ENCODE measurements at regions of chr9 and their contacts with region 1.

Region 1: GRCh38 chr9:90773617-90774016 is 28.0 kb upstream of the SYK start:
- DNase-seq: no peak
- ATAC-seq: no peak
- H3K4me3 Mint-ChIP-seq: no peak overlapping the region
- H3K27ac Mint-ChIP-seq: no peak overlapping the region
- H3K4me1 Mint-ChIP-seq: no peaks in the 10 kb centered on the region
- H3K27me3 Mint-ChIP-seq: no peaks in the 10 kb centered on the region

Region 2: DNA sequence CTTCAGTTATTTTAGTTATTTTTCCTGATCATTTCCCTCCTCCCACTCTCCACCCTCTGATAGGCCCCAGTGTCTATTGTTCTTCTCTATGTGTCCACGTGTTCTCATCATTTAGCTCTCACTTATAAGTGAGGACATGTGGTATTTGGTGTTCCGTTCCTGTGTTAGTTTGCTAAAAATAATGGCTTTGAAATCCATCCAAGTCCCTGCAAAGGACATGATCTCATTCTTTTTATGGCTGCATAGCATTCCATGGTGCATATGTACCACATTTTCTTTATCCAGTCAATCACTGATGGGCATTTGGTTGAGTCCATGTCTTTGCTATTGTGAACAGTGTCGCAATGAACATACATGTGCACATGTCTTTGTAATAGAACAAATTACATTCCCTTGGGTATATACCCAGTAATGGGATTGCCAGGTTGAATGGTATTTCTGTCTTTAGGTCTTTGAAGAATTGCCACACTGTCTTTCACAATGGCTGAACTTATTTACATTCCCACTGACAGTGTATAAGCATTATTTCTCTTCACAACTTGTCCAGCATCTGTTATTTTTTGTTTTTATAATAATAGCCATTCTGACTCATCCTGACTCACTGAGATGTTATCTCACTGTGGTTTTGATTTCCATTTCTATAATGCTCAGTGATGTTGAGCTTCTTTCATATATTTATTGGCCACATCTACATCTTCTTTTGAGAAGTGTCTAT is 113.8 kb before region 1 on chr9:
- CTCF ChIA-PET with region 1: no interaction called
- POLR2A ChIA-PET with region 1: no interaction called
- intact Hi-C with region 1: no loop called
- DNase-seq: no peak
- ATAC-seq: no peak
- H3K4me3 Mint-ChIP-seq: no peak overlapping the region
- H3K27ac Mint-ChIP-seq: no peak overlapping the region
- H3K4me1 Mint-ChIP-seq: no peaks in the 10 kb centered on the region
- H3K27me3 Mint-ChIP-seq: peaks cover 22% of the 10 kb centered on the region

Region 3: GRCh38 chr9:90830977-90831376 is 57.4 kb after region 1 on chr9:
- CTCF ChIA-PET with region 1: no interaction called
- POLR2A ChIA-PET with region 1: no interaction called
- intact Hi-C with region 1: loop called in 1 of 2 experiments (anchors 10 kb)
- DNase-seq: no peak
- ATAC-seq: no peak
- H3K4me3 Mint-ChIP-seq: no peak overlapping the region
- H3K27ac Mint-ChIP-seq: no peak overlapping the region
- H3K4me1 Mint-ChIP-seq: no peaks in the 10 kb centered on the region
- H3K27me3 Mint-ChIP-seq: peaks cover 5% of the 10 kb centered on the region

Region 4: DNA sequence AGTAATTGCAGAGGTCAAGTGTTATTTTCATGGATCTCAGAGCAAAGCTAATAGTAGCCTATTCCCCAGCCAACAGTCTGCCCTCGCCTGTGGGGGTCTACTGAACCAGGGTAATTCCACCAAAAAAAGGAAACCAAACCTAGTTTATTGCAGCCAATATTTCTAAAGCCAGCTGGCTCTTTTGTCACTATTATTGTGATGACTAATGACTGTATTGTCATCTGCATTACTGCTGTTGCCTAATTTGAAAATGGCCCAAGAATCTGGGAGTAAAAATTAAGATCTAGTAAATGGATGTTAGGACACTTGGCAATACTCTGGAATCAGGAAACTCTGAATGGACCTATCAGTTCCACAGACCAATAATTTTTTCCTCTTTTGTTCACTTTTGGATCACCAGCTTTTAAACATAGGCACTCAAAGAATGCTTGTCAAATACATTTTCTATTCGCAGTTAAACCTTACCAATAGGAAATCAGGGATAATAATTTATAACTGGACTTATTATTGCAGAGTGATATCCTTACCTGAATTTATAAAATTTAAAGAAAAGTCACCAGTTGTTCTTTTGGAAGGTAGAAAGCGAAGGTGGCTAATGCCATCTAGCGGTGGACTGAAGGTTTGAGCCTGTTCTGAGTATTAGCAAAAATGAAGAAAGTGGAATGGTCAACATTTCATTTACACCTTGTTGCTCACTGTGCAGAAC is 97.2 kb after region 1 on chr9:
- CTCF ChIA-PET with region 1: no interaction called
- POLR2A ChIA-PET with region 1: no interaction called
- intact Hi-C with region 1: loop called in 1 of 2 experiments (anchors 5 kb)
- DNase-seq: peak; percentile 57
- ATAC-seq: no peak
- H3K4me3 Mint-ChIP-seq: no peak overlapping the region
- H3K27ac Mint-ChIP-seq: no peak overlapping the region
- H3K4me1 Mint-ChIP-seq: no peaks in the 10 kb centered on the region
- H3K27me3 Mint-ChIP-seq: peaks cover 1% of the 10 kb centered on the region

Measured in activated CD4-positive, alpha-beta T cell treated with anti-CD3 and anti-CD28 coated beads for 36 hours (primary cell).